PC-9 (cell line): ENCODE measurements at regions of chr2 and their contacts with region 1.

Region 1: DNA sequence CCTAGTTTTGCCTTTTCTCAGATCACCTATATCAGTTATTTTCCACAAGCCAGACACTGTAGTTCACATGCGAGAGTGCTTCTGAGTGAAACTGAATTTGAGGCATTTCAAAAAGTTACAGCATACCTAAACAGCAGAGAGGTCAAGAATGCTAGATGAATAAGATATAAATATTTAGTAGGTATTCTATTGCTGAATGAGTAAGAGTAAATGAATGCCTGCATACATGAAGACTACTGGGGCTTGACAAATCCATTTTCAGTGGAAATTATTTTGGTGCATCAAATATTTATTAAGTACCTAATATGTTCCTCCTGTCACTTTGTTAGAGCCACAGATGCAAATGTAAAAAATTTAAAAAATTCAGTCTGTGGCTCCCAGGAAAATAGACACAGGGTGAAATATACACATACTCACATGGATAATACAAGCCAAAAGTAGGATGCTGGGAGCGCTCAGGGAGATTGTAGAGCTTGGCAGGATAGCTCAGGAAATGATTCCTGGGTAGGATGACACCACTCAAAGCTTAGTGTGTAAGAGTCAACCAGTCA is 27.6 kb upstream of the CDC42EP3 start:
- DNase-seq: peak; percentile 23 to 97
- H3K4me3 ChIP-seq: no peak overlapping the region
- H3K27ac ChIP-seq: peak overlapping the region; percentile 90
- H3K4me1 ChIP-seq: peaks cover 19% of the 10 kb centered on the region
- H3K27me3 ChIP-seq: no peaks in the 10 kb centered on the region
- CTCF ChIP-seq: no peak

Region 2: DNA sequence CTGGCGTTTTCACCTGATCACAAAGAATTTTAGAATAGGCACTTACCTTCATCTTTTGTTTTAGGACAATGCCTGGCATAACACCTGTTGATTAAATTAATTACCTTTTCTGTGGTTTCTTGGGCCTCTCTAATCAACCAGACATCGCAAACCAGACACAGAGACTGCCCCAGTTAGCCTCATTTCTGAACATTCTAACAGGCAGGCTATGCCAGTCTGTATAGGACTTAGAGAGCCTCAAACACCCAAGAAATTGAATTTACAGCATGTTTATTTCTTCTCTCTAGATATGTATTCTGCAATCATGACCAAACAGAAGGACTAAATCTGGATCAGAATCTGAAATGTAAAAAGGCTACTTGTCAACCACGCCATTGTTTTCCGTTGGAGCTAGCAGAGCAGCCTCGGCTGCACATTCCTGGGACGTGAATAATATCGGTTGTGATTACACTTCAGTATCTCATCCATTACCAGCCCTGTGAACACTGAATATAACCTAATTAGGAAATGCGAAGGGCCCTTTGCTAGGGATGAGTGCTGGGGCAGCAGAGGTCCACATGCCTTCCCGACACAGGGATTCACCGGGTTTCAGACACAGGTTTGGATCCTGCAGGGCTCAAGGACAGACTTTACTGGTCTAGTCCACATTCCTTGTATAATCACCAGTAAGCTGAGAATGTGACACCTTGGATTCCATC is 10.1 kb before region 1 on chr2:
- CTCF ChIA-PET with region 1: no interaction called
- POLR2A ChIA-PET with region 1: interaction called, 6 read pairs
- intact Hi-C with region 1: loop called (anchors 1 kb)
- DNase-seq: peak; percentile 76 to 97
- H3K4me3 ChIP-seq: peak overlapping the region; percentile 19; the same call in 1 of the 2 replicates
- H3K27ac ChIP-seq: peak overlapping the region; percentile 85
- H3K4me1 ChIP-seq: peaks cover 30% of the 10 kb centered on the region
- H3K27me3 ChIP-seq: no peaks in the 10 kb centered on the region
- CTCF ChIP-seq: no peak